ENCODE measurements at regions of chr7 and their contacts with region 1.

Region 1: DNA sequence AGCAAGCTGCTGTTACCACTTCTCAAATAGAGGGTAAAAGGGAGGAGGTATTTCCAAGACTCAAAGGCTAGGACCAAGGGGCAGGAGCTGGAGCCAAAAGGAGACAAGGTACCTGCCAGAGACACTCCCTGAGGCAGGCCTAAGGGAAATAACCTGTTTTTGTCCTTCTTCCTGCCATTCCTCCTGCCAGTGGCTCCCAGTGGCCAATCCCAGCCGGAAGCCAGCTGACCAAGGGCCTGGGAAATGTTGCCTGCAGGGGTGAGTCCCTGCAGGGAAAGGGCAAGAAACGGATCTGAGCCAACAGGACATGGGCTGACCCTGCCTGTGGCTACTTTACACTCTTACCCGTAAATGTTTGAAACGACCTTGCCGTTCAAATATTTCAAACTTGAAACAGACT is 3.5 kb downstream of the CYTH3 start:
- DNase-seq: no peak
- ATAC-seq: no peak
- H3K4me3 ChIP-seq: no peak overlapping the region
- H3K27ac ChIP-seq: peak overlapping the region; percentile 13; the same call in 1 of the 2 replicates
- H3K4me1 ChIP-seq: peaks cover 32% of the 10 kb centered on the region
- H3K27me3 ChIP-seq: no peaks in the 10 kb centered on the region
- CTCF ChIP-seq: no peak

Region 2: DNA sequence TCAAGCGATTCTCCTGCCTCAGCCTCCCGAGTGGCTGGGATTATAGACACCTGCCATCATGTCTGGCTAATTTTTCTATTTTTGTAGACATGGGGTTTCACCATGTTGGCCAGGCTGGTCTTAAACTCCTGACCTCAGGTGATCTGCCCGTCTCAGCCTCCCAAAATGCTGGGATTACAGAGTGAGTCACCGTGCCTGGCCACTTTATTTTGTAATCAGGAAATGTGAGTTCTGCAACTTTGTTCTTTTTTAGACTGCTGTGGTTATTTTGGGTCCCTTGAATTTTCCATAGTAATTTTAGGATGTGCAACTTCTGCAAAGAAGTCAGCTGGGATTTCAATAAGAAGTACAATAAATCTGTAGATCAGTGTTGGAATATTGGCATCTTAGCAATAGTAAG is 93.3 kb before region 1 on chr7:
- CTCF ChIA-PET with region 1: interaction called, 12 read pairs
- POLR2A ChIA-PET with region 1: no interaction called
- in situ Hi-C with region 1: no loop called
- intact Hi-C with region 1: no loop called
- DNase-seq: no peak
- ATAC-seq: no peak
- H3K4me3 ChIP-seq: no peak overlapping the region
- H3K27ac ChIP-seq: no peak overlapping the region
- H3K4me1 ChIP-seq: no peaks in the 10 kb centered on the region; the same call in 1 of the 2 replicates
- H3K27me3 ChIP-seq: no peaks in the 10 kb centered on the region
- CTCF ChIP-seq: no peak

Region 3: DNA sequence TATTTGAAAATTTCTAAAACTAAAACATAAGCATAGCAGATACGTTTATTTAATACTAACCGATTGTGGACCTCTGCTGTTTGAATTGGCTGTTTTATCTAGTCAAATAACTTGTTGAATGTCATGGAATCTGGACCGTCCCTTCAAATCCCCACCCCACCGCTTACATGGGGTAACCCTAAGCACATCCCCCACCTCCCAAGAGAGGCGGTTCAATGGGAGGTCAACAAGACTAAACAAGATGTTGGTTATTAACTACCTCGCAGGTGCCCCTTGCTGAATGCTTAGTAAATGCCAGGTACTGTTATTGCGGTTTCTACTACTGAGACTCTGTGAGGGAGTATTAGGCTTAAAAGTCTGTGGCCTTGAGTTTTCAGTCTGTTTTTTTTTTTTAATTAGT is 107.9 kb after region 1 on chr7:
- CTCF ChIA-PET with region 1: no interaction called
- POLR2A ChIA-PET with region 1: interaction called, 12 read pairs
- in situ Hi-C with region 1: no loop called
- intact Hi-C with region 1: no loop called
- DNase-seq: no peak
- ATAC-seq: no peak
- H3K4me3 ChIP-seq: peak overlapping the region; percentile 67 to 98
- H3K27ac ChIP-seq: peak overlapping the region; percentile 91
- H3K4me1 ChIP-seq: peaks cover 32% of the 10 kb centered on the region
- H3K27me3 ChIP-seq: no peaks in the 10 kb centered on the region
- CTCF ChIP-seq: no peak

Region 4: GRCh38 chr7:6392706-6393666 is 124.1 kb after region 1 on chr7:
- CTCF ChIA-PET with region 1: no interaction called
- POLR2A ChIA-PET with region 1: no interaction called
- in situ Hi-C with region 1: no loop called
- intact Hi-C with region 1: no loop called
- DNase-seq: no peak
- ATAC-seq: peak; percentile 52
- H3K4me3 ChIP-seq: no peak overlapping the region
- H3K27ac ChIP-seq: peak overlapping the region; percentile 42; the same call in 1 of the 2 replicates
- H3K4me1 ChIP-seq: peaks cover 29% of the 10 kb centered on the region
- H3K27me3 ChIP-seq: no peaks in the 10 kb centered on the region
- CTCF ChIP-seq: no peak

Region 5: GRCh38 chr7:6419310-6419773 is 150.4 kb after region 1 on chr7:
- CTCF ChIA-PET with region 1: no interaction called
- POLR2A ChIA-PET with region 1: no interaction called
- in situ Hi-C with region 1: no loop called
- intact Hi-C with region 1: no loop called
- DNase-seq: no peak
- ATAC-seq: no peak
- H3K4me3 ChIP-seq: no peak overlapping the region
- H3K27ac ChIP-seq: no peak overlapping the region
- H3K4me1 ChIP-seq: 0 out of 2 replicates have a peak, but pooled peaks cover 3% of the 10 kb centered on the region
- H3K27me3 ChIP-seq: no peaks in the 10 kb centered on the region
- CTCF ChIP-seq: no peak

Measured in Panc1 (cell line).